WTC11 (cell line): ENCODE measurements at regions of chr12 and their contacts with region 1.

Region 1: DNA sequence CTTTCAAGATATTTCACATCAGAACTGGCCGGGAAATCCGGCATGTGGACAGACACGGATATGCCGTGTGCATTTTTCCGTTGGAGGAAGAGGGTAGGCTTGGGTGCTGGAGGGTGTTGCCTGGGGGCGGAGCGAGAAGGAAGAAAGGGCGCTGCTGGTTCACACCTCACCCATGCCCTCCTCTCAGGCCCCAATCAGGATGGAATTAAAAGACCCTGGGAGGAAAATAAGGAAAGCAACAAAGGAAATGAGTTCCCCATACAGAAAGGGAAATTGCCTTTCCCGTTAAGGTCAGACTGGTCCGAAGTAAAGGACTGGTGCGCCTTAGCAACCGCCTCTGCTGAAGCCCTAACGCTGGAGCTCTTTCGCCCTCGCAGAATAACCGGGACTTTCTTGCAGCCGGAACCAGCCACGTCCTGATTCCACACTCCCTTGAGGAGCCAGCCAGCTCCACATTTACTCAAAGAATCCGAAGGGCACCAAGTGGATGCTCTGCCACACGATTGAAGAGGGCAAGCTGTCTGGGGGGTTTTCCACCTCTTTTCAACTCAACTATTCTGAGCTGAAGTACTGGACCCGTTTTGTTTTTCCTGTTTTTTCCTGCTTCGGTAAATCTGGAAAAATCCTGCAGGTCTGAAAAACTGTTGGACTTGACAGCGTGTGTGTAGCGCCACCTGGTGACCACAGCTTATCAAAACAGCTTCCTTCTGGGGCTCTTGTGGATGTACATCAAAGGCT is 37.7 kb upstream of the BCL2L14 start:
- DNase-seq: peak; percentile 93
- ATAC-seq: peak; percentile 75
- H3K4me3 Mint-ChIP-seq: peak overlapping the region; percentile 61
- H3K27ac Mint-ChIP-seq: peak overlapping the region; percentile 64
- H3K4me1 Mint-ChIP-seq: peaks cover 11% of the 10 kb centered on the region
- H3K27me3 Mint-ChIP-seq: no peaks in the 10 kb centered on the region; the same call in 1 of the 2 replicates
- CTCF ChIP-seq: peak; percentile 90

Region 2: GRCh38 chr12:11513288-11513687 is 519.7 kb before region 1 on chr12:
- CTCF ChIA-PET with region 1: interaction called, 10 read pairs
- POLR2A ChIA-PET with region 1: no interaction called
- DNase-seq: no peak
- ATAC-seq: peak; percentile 61
- H3K4me3 Mint-ChIP-seq: no peak overlapping the region
- H3K27ac Mint-ChIP-seq: no peak overlapping the region
- H3K4me1 Mint-ChIP-seq: peaks cover 18% of the 10 kb centered on the region
- H3K27me3 Mint-ChIP-seq: no peaks in the 10 kb centered on the region
- CTCF ChIP-seq: no peak

Region 3: DNA sequence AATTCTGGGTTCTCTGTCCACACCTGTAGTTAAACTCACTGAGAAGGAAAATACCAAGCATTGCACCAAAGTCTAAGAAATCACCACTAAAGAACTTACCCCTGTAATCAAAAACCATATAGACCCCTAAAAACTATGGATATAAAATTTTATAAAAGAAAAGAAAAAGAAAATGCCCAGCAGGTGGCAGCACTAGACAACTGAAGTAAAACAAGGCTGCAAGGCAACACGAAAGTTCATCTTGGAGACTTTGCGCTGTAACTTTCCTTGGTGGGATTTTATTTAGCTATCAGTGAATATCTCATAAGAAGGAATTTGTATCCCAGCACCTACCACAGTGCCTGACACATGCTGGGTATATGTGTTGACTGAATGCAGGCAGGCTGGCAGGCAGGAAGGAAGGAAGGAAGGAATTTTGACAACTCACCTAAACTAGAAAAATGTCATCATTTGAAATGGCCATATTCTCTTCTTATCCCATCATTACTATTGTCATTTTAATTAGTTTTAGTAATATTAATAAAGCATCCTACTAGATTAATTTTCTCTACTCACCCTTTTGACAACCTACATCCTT is 451.8 kb before region 1 on chr12:
- CTCF ChIA-PET with region 1: interaction called, 42 read pairs
- POLR2A ChIA-PET with region 1: no interaction called
- DNase-seq: peak; percentile 48
- ATAC-seq: no peak
- H3K4me3 Mint-ChIP-seq: no peak overlapping the region
- H3K27ac Mint-ChIP-seq: no peak overlapping the region; the same call in 1 of the 2 replicates
- H3K4me1 Mint-ChIP-seq: peaks cover 11% of the 10 kb centered on the region
- H3K27me3 Mint-ChIP-seq: no peaks in the 10 kb centered on the region
- CTCF ChIP-seq: peak; percentile 55

Region 4: DNA sequence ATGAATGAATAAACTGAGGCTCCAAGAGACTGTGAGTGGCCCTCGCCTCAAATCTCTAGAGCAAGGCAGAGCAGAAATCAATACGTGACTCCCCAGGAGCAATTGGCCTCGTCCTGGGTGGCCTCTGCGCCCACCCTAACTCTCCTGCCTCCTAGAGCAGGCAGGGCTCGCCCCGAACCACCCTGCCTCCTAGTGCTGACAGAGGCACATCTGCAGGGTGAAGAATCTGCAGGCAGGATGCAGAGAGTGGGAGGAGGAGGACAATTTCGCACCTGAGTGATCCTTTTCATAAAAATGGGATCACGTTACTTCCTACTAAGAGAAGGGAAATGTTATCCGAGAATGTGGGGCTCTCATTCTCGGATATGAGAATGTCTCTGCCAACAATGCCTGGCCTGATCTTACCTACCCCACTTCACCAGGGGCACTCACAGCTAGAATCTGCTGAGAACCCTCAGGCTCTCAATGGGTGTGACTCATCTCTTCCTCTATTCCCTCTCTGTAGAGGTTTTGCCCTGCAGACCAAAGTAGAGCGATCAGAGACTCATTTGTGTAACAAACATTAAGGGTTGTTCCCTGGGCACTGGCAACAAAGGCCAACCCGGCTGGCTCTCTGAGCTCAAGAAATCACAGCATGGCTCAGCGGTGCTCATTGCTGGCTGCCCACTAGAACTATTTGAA is 23.9 kb before region 1 on chr12:
- CTCF ChIA-PET with region 1: interaction called, 40 read pairs
- POLR2A ChIA-PET with region 1: no interaction called
- DNase-seq: peak; percentile 46
- ATAC-seq: peak; percentile 89
- H3K4me3 Mint-ChIP-seq: peak overlapping the region; percentile 28; the same call in 1 of the 2 replicates
- H3K27ac Mint-ChIP-seq: peak overlapping the region; percentile 85
- H3K4me1 Mint-ChIP-seq: peaks cover 49% of the 10 kb centered on the region
- H3K27me3 Mint-ChIP-seq: no peaks in the 10 kb centered on the region
- CTCF ChIP-seq: no peak

Region 5: GRCh38 chr12:12064596-12064995 is 31.6 kb after region 1 on chr12:
- CTCF ChIA-PET with region 1: no interaction called
- POLR2A ChIA-PET with region 1: no interaction called
- DNase-seq: no peak
- ATAC-seq: no peak
- H3K4me3 Mint-ChIP-seq: no peak overlapping the region
- H3K27ac Mint-ChIP-seq: peak overlapping the region; percentile 41; the same call in 1 of the 2 replicates
- H3K4me1 Mint-ChIP-seq: peaks cover 38% of the 10 kb centered on the region
- H3K27me3 Mint-ChIP-seq: no peaks in the 10 kb centered on the region
- CTCF ChIP-seq: no peak

Region 6: DNA sequence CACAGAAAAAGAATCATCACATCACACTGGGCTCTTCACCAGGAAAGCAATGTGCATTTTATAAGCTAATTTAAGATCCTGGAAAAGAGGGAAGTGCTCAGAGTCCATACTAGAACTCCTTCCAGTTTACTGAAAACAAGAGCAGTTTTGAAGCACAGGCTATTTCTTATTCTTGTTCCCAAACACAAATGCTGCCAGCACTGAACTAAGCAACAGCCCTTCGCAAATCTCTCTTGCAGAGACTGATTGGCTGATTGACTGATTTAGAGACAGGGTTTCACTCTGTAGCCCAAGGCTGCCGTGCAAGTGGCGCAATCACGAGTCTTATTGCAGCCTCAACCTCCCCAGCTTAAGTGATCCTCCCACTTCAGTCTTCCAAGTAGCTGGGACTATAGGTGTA is 82.5 kb after region 1 on chr12:
- CTCF ChIA-PET with region 1: no interaction called
- POLR2A ChIA-PET with region 1: no interaction called
- DNase-seq: no peak
- ATAC-seq: no peak
- H3K4me3 Mint-ChIP-seq: no peak overlapping the region
- H3K27ac Mint-ChIP-seq: peak overlapping the region; percentile 34
- H3K4me1 Mint-ChIP-seq: no peaks in the 10 kb centered on the region
- H3K27me3 Mint-ChIP-seq: no peaks in the 10 kb centered on the region
- CTCF ChIP-seq: no peak